ENCODE measurements at regions of chr11 and their contacts with region 1.

Region 1: DNA sequence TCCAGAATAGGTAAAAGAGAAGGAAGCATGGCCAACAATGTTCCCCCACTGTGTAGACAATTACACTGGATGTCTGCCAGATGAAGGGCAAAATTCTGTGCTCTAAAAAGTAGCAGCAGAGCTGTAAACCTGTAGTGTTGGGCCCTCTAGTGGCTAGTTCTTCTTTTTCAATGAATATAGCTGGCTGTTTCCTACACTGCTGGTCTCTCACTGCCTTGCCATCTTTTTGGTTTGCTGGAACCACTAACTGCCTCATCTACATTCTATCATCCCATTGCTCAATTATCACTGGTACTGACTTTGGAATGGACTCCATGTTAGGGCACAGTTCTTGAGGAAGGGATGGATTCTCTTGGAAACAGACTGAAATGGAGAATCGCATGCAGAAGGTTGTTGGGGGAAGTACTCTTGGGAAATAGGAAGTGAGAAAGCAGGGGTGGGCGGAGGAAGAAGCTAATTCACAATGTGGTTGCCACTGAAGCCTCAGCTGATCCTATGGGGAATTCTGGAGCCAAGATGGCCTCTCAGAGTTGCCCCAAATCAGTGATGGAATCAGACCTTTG is 17.9 kb downstream of the KCNE3 start:
- DNase-seq: peak; percentile 96
- H3K4me3 ChIP-seq: no peak overlapping the region
- H3K27ac ChIP-seq: no peak overlapping the region
- H3K4me1 ChIP-seq: peaks cover 18% of the 10 kb centered on the region
- H3K27me3 ChIP-seq: no peaks in the 10 kb centered on the region
- CTCF ChIP-seq: peak; percentile 89

Region 2: DNA sequence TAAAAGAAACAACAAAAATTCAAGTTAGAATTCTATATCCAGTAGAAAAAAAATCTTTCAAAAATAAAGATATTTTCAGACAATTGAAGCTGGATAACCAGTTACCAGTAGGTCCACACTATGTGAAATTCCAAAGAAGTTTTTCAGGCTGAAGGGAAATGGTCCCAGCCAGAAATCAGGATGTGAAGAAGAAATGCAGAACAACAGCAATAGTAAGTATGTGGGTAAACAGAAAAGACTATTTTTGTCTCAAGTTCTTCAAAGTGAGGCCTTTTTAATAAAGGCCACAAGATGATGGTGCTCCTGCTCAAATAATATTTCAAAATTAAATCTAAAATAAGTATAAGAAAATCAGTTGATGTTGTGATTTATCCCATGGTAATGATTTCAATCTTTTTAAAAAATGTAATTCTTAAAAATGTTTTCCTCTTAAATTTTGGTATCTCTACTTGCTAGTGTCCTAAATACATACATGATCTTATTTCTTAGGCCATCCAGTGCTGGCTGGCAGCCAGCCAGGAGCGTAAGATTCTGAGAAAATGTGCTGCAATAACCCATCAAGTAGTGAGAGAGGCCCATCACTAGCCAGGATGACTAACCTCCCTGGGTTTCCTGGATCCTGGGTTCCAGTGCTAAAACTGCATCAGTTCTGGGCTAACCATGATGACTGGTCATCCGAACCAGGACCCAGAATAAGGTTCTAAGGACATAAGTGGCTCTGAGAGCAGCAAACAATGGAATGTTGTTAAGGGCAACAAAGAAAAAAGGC is 425.0 kb before region 1 on chr11:
- CTCF ChIA-PET with region 1: interaction called, 10 read pairs
- POLR2A ChIA-PET with region 1: no interaction called
- intact Hi-C with region 1: no loop called
- DNase-seq: no peak
- H3K4me3 ChIP-seq: no peak overlapping the region
- H3K27ac ChIP-seq: no peak overlapping the region
- H3K4me1 ChIP-seq: no peaks in the 10 kb centered on the region
- H3K27me3 ChIP-seq: no peaks in the 10 kb centered on the region
- CTCF ChIP-seq: no peak

Region 3: DNA sequence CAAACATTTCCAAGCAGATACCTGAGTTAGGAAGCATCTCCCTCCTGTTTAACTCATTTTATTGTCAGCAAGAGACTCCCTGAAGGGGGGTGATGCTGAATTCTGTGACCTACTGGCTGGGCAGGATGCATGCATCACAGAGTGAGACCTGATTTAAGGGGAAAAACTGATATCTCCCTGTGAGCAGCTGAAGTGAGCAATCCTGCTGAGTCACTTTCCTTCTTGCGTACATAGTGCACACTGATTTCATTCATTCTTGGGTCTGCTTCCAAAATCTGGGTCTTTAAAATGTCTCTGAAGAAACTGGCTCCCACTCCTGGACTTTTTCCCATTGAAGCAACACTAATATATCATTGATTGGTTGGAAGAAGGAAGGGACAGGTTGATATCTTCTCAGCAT is 161.3 kb before region 1 on chr11:
- CTCF ChIA-PET with region 1: no interaction called
- POLR2A ChIA-PET with region 1: no interaction called
- intact Hi-C with region 1: no loop called
- DNase-seq: peak; percentile 60
- H3K4me3 ChIP-seq: no peak overlapping the region
- H3K27ac ChIP-seq: no peak overlapping the region
- H3K4me1 ChIP-seq: peaks cover 7% of the 10 kb centered on the region
- H3K27me3 ChIP-seq: no peaks in the 10 kb centered on the region
- CTCF ChIP-seq: no peak

Region 4: GRCh38 chr11:74388678-74389327 is 60.6 kb before region 1 on chr11:
- CTCF ChIA-PET with region 1: interaction called, 16 read pairs
- POLR2A ChIA-PET with region 1: no interaction called
- intact Hi-C with region 1: loop called (anchors 2 kb)
- DNase-seq: peak; percentile 82
- H3K4me3 ChIP-seq: no peak overlapping the region
- H3K27ac ChIP-seq: no peak overlapping the region
- H3K4me1 ChIP-seq: peaks cover 12% of the 10 kb centered on the region
- H3K27me3 ChIP-seq: no peaks in the 10 kb centered on the region
- CTCF ChIP-seq: peak; percentile 95

Region 5: DNA sequence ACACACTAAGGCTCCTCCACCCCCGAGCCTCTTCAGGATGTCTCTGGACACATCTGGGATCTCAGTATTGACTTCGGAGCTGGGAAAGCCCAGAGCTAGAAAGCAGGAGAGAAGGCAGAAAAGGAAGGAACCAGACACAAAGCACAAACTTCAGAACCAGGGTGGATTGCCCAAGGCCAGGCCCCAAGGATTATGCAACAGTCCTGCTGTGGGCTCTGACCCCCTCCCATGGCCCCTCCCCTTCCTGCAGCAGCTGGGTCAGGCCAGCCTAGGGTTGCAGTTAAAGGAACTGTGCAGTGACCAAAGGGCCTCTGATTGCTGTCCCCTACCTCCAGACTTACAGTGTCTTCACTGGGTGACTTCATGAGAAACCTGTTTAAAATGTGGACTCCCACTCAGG is 12.6 kb after region 1 on chr11:
- CTCF ChIA-PET with region 1: interaction called, 11 read pairs
- POLR2A ChIA-PET with region 1: no interaction called
- intact Hi-C with region 1: no loop called
- DNase-seq: no peak
- H3K4me3 ChIP-seq: no peak overlapping the region
- H3K27ac ChIP-seq: no peak overlapping the region
- H3K4me1 ChIP-seq: peaks cover 39% of the 10 kb centered on the region
- H3K27me3 ChIP-seq: no peaks in the 10 kb centered on the region
- CTCF ChIP-seq: no peak

Region 6: GRCh38 chr11:74570266-74571061 is 121.0 kb after region 1 on chr11:
- CTCF ChIA-PET with region 1: interaction called, 91 read pairs
- POLR2A ChIA-PET with region 1: no interaction called
- intact Hi-C with region 1: loop called (anchors 1 kb)
- DNase-seq: peak; percentile 81
- H3K4me3 ChIP-seq: no peak overlapping the region
- H3K27ac ChIP-seq: no peak overlapping the region
- H3K4me1 ChIP-seq: no peaks in the 10 kb centered on the region
- H3K27me3 ChIP-seq: no peaks in the 10 kb centered on the region
- CTCF ChIP-seq: peak; percentile 93

Region 7: DNA sequence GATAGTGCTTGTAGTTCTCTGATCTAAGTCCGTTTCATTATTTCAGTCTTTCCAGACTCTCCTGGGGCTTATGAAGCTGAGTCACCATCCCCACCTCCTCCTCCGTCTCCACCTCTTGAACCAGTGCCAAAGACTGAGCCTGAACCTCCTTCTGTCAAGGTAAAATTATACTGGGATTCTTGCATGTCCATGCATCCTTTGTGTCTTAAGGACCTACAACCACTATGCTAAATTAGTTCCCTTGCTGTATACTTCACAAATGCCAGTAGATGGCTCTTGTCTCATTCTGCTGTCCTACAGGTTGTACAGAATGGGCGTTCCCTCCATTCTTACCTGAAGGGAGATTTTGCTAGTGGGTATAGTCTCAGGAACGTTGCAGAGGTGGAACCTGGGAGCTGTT is 185.1 kb after region 1 on chr11:
- CTCF ChIA-PET with region 1: no interaction called
- POLR2A ChIA-PET with region 1: no interaction called
- intact Hi-C with region 1: no loop called
- DNase-seq: peak; percentile 57
- H3K4me3 ChIP-seq: no peak overlapping the region
- H3K27ac ChIP-seq: no peak overlapping the region
- H3K4me1 ChIP-seq: peaks cover 18% of the 10 kb centered on the region
- H3K27me3 ChIP-seq: no peaks in the 10 kb centered on the region
- CTCF ChIP-seq: peak; percentile 47; the same call in 1 of the 2 replicates

Measured in A673 (cell line).